ENCODE measurements at regions of chr1 and their contacts with region 1.

Region 1: DNA sequence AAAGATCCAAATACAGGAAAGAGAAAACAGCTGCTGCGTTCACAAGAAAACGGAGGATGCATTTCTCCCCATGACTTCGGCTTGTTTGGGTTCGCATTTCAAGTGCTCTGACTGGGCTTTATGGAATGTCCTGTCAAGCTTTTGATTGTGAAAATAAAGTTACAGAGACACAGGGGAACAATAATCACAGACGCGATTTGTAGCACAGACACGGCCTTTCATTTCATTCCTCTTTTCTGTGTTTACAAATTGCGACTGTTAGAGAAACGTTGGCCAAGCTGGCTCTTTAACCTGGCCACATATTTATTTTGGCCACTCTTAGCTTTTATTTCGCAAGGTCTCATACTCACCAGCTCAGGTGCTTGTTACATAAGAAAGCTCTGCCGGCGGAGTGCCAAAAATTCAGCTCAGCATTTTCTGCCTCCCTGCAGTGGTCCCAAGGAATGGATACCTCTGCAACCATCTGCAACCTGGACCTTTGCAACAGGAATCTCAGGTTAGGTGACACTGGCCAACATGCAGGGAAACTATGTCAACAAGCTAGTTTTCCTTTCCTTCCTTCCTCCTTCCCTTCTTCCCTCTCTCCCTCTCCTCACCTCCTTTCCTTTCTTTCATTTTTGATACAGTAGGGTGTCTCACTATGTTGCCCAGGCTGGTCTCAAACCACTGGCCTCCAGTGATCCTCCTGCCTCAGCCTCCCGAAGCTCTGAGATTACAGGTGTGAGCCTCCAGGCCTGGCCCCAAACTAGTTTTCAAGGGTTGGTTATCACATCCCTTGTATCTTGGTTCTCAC is 58.2 kb upstream of the SLC45A1 start:
- DNase-seq: peak; percentile 74 to 78
- ATAC-seq: peak in 1 of 2 donors; percentile 87
- H3K4me3 ChIP-seq: peak overlapping the region in 1 of 4 donors; percentile 45
- H3K27ac ChIP-seq: peak overlapping the region; percentile 75 to 87 (median 84)
- H3K4me1 ChIP-seq: peaks cover 13 to 19% of the 10 kb centered on the region in 2 donors
- H3K27me3 ChIP-seq: no peaks in the 10 kb centered on the region
- CTCF ChIP-seq: no peak
- POLR2A ChIP-seq: no peak

Region 2: DNA sequence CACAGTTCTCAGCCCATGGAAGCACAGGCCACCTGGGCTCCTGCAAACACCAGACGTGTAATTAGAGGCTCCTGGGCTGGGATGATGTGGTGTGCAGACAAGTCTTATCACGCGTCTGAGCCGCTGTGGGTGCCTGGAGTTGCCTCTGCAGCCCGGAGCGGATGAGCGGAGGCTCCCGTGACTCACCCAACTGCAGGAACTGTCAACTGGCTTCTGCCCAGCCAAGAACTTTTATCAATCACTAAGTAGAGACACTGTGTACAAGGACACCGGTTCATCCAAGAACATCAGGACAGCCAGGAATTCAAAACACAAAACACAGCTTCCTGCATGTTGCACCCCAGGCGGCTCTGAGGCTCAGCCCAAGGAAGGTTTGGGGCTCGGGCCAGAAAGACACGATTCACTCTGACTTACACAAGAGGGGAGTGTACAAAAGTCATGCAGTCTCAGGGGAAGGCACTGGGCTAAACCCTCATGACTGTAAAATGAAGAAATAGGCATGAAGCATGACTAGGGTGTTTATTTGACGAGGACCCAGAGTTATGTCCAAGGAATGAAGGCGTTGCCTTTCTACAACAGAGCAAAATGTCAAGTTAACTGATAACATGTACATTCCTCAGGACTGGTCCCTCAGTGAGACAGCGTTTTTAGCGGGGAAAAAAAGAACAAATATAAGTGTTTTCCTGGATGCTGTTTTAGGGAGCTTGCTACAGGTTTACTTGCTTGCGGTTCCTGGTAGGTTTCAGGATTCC is 254.7 kb before region 1 on chr1:
- in situ Hi-C with region 1: no loop called
- intact Hi-C with region 1: loop called (anchors 2 kb)
- DNase-seq: peak; percentile 98
- ATAC-seq: peak; percentile 85 to 92
- H3K4me3 ChIP-seq: peak overlapping the region in 2 of 4 donors; percentile 15 to 26
- H3K27ac ChIP-seq: peak overlapping the region; percentile 87 to 92 (median 88)
- H3K4me1 ChIP-seq: peaks cover 29 to 44% of the 10 kb centered on the region in 2 donors
- H3K27me3 ChIP-seq: no peaks in the 10 kb centered on the region
- CTCF ChIP-seq: peak in 1 of 5 experiments; percentile 29
- POLR2A ChIP-seq: peak in 1 of 2 donors; percentile 55

Region 3: GRCh38 chr1:8189931-8190483 is 69.7 kb before region 1 on chr1:
- in situ Hi-C with region 1: no loop called
- intact Hi-C with region 1: loop called (anchors 2 kb)
- DNase-seq: peak; percentile 85
- ATAC-seq: peak; percentile 98 to 99
- H3K4me3 ChIP-seq: no peak overlapping the region
- H3K27ac ChIP-seq: peak overlapping the region; percentile 79 to 84 (median 82)
- H3K4me1 ChIP-seq: peaks cover 5 to 10% of the 10 kb centered on the region in 2 donors
- H3K27me3 ChIP-seq: no peaks in the 10 kb centered on the region
- CTCF ChIP-seq: no peak
- POLR2A ChIP-seq: peak in 1 of 2 donors; percentile 40

Region 4: GRCh38 chr1:8202182-8202905 is 57.4 kb before region 1 on chr1:
- in situ Hi-C with region 1: no loop called
- intact Hi-C with region 1: loop called (anchors 5 kb)
- DNase-seq: peak; percentile 50 to 65
- ATAC-seq: peak; percentile 81 to 87
- H3K4me3 ChIP-seq: no peak overlapping the region
- H3K27ac ChIP-seq: peak overlapping the region; percentile 56 to 74 (median 68)
- H3K4me1 ChIP-seq: peaks cover 16 to 23% of the 10 kb centered on the region in 2 donors
- H3K27me3 ChIP-seq: no peaks in the 10 kb centered on the region
- CTCF ChIP-seq: no peak
- POLR2A ChIP-seq: no peak

Region 5: GRCh38 chr1:8217011-8217711 is 42.5 kb before region 1 on chr1:
- in situ Hi-C with region 1: no loop called
- intact Hi-C with region 1: no loop called
- DNase-seq: no peak
- ATAC-seq: peak; percentile 32 to 43
- H3K4me3 ChIP-seq: peak overlapping the region; percentile 48 to 58 (median 54)
- H3K27ac ChIP-seq: peak overlapping the region; percentile 42 to 64 (median 58)
- H3K4me1 ChIP-seq: peaks cover 4 to 15% of the 10 kb centered on the region in 2 donors
- H3K27me3 ChIP-seq: no peaks in the 10 kb centered on the region
- CTCF ChIP-seq: peak in 1 of 5 experiments; percentile 24
- POLR2A ChIP-seq: peak in 1 of 2 donors; percentile 17

Region 6: DNA sequence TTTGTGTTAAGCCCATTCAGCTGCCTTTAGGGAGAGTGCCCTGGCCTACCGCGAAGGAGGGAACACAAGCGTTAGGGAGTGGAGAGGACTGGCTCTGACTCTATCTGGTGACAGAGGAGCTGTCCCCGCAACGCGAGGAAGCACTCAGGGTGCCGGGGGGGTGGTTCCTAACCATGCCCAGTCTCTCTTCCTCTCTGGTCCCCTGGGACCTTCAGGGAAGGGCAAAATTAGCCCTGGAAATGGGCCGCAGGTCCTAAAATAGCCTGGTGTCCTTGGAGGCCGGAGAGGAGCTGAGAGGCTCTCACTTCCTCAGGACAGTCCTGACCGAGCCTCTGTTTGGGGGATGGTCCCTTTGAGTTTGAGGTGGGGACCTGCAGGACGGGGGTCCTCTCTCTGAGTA is 64.0 kb after region 1 on chr1:
- in situ Hi-C with region 1: no loop called
- intact Hi-C with region 1: no loop called
- DNase-seq: peak in 1 of 2 donors; percentile 58
- ATAC-seq: peak; percentile 81 to 83
- H3K4me3 ChIP-seq: no peak overlapping the region
- H3K27ac ChIP-seq: peak overlapping the region; percentile 19 to 75 (median 42)
- H3K4me1 ChIP-seq: peaks cover 5 to 10% of the 10 kb centered on the region in 2 donors
- H3K27me3 ChIP-seq: peaks cover 0 to under 1% (median 0%) of the 10 kb centered on the region in 3 donors
- CTCF ChIP-seq: no peak
- POLR2A ChIP-seq: no peak

Measured in gastrocnemius medialis (tissue), 4 donors.